A549 (cell line): ENCODE measurements at regions of chr7 and their contacts with region 1.

Region 1: GRCh38 chr7:151759591-151760042 is 117.3 kb downstream of the PRKAG2 start:
- DNase-seq: peak; percentile 71 to 86
- ATAC-seq: peak; percentile 71 to 88
- H3K4me3 ChIP-seq: no peak overlapping the region
- H3K27ac ChIP-seq: peak overlapping the region; percentile 35 to 96; a peak in 4 of 6 replicates
- H3K4me1 ChIP-seq: peaks cover 35% of the 10 kb centered on the region
- CTCF ChIP-seq: peak; percentile 97
- EP300 ChIP-seq: no peak
- POLR2A ChIP-seq: no peak
- RAD21 ChIP-seq: peak; percentile 98

Region 2: GRCh38 chr7:151448261-151449252 is 311.1 kb before region 1 on chr7:
- CTCF ChIA-PET with region 1: interaction called, 22 read pairs
- POLR2A ChIA-PET with region 1: no interaction called
- DNase-seq: peak; percentile 69 to 90
- ATAC-seq: peak; percentile 90 to 92
- H3K4me3 ChIP-seq: peak overlapping the region; percentile 51
- H3K27ac ChIP-seq: peak overlapping the region; percentile 83 to 98
- H3K4me1 ChIP-seq: peaks cover 11% of the 10 kb centered on the region; the same call in 2 of the 3 replicates
- CTCF ChIP-seq: peak; percentile 90
- EP300 ChIP-seq: no peak
- POLR2A ChIP-seq: no peak; the same call in 1 of the 2 replicates
- RAD21 ChIP-seq: peak; percentile 90 to 96

Region 3: DNA sequence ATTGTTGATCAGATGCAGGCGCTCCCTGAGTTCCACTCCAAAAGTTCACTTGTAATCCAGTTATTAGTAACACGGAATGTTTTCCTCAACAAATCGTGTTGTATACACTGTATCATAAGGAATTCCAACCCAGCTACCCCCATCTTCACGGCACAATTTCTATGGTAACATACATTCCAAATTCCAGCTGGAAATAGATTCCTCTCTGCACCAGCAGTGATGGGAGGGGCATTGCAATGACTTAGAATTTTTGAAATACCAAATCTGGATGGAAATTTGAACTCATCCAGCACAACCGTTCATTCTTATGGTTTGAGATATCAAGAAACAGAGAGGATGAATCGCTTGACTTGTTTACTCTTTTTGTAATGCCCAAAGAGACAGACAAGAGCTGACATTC is 201.0 kb before region 1 on chr7:
- CTCF ChIA-PET with region 1: interaction called, 155 read pairs
- POLR2A ChIA-PET with region 1: interaction called, 8 read pairs
- DNase-seq: no peak
- ATAC-seq: no peak
- H3K4me3 ChIP-seq: no peak overlapping the region
- H3K27ac ChIP-seq: no peak overlapping the region
- H3K4me1 ChIP-seq: no peaks in the 10 kb centered on the region
- CTCF ChIP-seq: no peak
- EP300 ChIP-seq: no peak
- POLR2A ChIP-seq: no peak
- RAD21 ChIP-seq: no peak

Region 4: GRCh38 chr7:151590071-151590850 is 169.4 kb before region 1 on chr7:
- CTCF ChIA-PET with region 1: interaction called, 20 read pairs
- POLR2A ChIA-PET with region 1: no interaction called
- DNase-seq: no peak
- ATAC-seq: no peak
- H3K4me3 ChIP-seq: no peak overlapping the region
- H3K27ac ChIP-seq: no peak overlapping the region
- H3K4me1 ChIP-seq: peaks cover 16% of the 10 kb centered on the region; the same call in 2 of the 3 replicates
- CTCF ChIP-seq: no peak
- EP300 ChIP-seq: no peak
- POLR2A ChIP-seq: no peak
- RAD21 ChIP-seq: no peak

Region 5: GRCh38 chr7:151631968-151632749 is 127.5 kb before region 1 on chr7:
- CTCF ChIA-PET with region 1: interaction called, 173 read pairs
- POLR2A ChIA-PET with region 1: interaction called, 6 read pairs
- DNase-seq: peak; percentile 49 to 77
- ATAC-seq: peak; percentile 91
- H3K4me3 ChIP-seq: peak overlapping the region; percentile 91
- H3K27ac ChIP-seq: peak overlapping the region; percentile 94
- H3K4me1 ChIP-seq: peaks cover 27% of the 10 kb centered on the region
- CTCF ChIP-seq: peak; percentile 82
- EP300 ChIP-seq: no peak
- POLR2A ChIP-seq: peak; percentile 46
- RAD21 ChIP-seq: peak; percentile 32 to 62; a peak in 4 of 5 replicates

Region 6: DNA sequence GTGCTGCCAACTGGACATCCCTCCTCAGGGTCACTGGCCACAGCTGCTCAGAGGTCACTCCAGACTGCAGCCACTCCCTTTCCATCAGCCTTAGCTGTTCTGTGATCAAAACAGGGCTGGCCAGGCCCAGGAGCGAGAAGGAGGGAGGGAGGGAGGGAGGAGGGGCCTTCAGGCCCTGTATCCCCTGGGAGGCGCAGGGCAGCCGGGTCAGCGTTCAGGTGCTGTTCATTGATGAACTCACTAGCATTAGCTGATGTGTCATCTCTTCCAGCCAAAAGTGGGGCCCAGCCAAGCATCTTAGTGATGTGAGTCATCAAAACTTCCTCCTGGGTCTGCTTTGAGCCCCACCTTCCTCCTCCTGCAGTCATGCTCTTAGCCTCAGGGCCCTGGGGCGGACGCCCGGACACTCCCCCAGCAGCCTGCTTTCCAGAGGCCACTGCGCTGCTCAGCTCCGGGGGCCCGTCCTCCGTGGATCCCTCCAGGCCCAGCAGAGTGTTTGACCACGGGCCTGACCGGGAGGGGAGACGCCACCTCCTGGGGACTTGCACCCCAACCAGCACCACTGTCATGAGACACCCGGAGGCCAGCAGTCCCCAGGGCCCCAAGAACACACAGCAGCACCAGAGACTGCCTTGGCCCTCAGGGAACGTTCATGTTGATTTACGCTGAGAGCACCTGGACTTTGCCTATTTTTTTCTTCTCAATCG is 31.9 kb before region 1 on chr7:
- CTCF ChIA-PET with region 1: interaction called, 18 read pairs
- POLR2A ChIA-PET with region 1: interaction called, 4 read pairs
- DNase-seq: peak; percentile 91 to 93
- ATAC-seq: peak; percentile 92 to 95
- H3K4me3 ChIP-seq: 0 out of 3 replicates have a peak overlapping the region, but pooled peaks have one; percentile 19
- H3K27ac ChIP-seq: peak overlapping the region; percentile 91 to 94
- H3K4me1 ChIP-seq: peaks cover 34% of the 10 kb centered on the region
- CTCF ChIP-seq: no peak
- EP300 ChIP-seq: peak; percentile 62 to 73; a peak in 3 of 5 replicates
- POLR2A ChIP-seq: no peak
- RAD21 ChIP-seq: peak in 1 of 2 experiments; percentile 55; a peak in 3 of 5 replicates

Region 7: DNA sequence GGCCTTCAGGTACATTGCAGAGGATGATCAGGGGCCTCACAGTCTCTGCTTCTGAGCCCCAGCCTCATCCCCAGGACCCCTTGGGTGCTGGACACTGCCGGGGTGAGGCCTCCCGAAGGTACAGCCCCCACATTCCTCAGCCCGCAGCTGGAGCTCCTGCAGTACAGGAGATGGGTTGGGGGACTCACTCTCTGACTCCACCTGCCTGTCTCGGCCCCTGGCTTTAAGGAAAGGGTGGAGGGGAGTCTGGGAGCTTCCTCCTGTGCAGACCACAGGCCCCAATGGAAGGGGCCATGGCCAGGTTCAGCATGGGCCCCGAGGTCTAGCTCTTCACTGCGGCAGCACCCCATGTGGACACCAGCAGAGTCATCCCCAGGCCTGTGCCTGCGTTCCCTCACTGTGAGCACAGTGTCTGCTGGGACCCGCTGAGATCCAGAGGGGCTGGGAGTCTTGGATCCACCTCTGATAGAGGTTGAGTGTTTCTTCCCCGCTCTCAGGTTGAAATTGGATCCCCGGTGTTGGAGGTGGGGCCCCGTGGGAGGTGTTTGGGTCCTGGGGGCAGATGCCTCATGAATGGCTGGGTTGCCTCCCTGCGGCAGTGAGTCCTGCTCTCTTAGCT is 17.4 kb after region 1 on chr7:
- CTCF ChIA-PET with region 1: interaction called, 71 read pairs
- POLR2A ChIA-PET with region 1: no interaction called
- DNase-seq: no peak
- ATAC-seq: no peak
- H3K4me3 ChIP-seq: no peak overlapping the region
- H3K27ac ChIP-seq: no peak overlapping the region
- H3K4me1 ChIP-seq: no peaks in the 10 kb centered on the region
- CTCF ChIP-seq: no peak
- EP300 ChIP-seq: no peak
- POLR2A ChIP-seq: no peak
- RAD21 ChIP-seq: no peak

Region 8: GRCh38 chr7:152202056-152202455 is 442.4 kb after region 1 on chr7:
- CTCF ChIA-PET with region 1: no interaction called
- POLR2A ChIA-PET with region 1: no interaction called
- DNase-seq: no peak
- ATAC-seq: no peak
- H3K4me3 ChIP-seq: no peak overlapping the region
- H3K27ac ChIP-seq: no peak overlapping the region
- H3K4me1 ChIP-seq: no peaks in the 10 kb centered on the region
- CTCF ChIP-seq: no peak
- EP300 ChIP-seq: no peak
- POLR2A ChIP-seq: no peak
- RAD21 ChIP-seq: no peak